Ascending aorta (tissue), 2 donors: ENCODE measurements at regions of chr16 and their contacts with region 1.

Region 1: DNA sequence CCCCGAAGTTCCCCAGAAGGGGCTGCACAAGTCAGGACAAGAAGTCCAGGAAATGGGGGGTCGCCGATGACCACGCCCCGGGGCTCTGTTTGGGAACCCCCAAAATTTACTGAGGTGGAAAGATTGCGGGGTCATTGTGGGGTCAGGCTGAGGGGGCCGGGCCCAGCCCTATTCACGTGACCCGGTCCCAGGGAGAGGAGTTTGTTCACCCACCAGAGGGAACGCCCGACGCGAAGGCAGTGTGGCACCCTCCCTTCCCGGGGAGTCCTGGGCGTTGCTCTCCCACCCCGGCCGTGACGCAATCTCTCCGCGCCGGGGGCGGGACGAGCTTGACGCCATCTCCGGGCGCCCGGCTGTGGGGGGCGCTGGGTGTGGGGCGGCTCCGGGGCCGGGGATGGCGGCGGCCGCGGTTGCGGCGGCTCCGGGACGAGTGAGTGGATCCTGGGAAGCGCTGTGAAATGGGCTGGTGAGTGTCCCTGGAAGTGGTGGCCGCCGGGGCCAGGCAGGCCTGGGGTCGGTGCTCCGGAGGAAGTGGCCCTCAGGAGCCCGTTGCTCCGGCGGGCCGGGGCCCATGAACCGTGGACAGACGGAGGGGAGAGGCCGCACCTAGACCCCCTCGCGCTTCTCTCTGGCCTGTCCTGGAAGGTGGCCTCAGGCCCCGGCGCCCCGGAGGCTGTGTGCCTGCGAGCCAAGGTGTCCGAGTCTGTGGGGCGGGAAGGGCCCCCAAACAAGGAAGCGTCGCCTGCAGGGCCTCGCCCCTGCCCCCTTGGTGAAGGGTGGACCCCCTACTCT is at the start of gene ATXN1L:
- DNase-seq: peak; percentile 65 to 96
- H3K4me3 ChIP-seq: peak within 1 kb of the TSS; percentile 81 to 88
- H3K27ac ChIP-seq: peak within 1 kb of the TSS; percentile 83 to 91
- H3K4me1 ChIP-seq: peaks cover 0 to 7% of the 10 kb centered on the region in 2 donors
- H3K27me3 ChIP-seq: no peaks in the 10 kb centered on the region
- CTCF ChIP-seq: no peak
- total RNA-seq, gene ATXN1L: 11.8 TPM

Region 2: DNA sequence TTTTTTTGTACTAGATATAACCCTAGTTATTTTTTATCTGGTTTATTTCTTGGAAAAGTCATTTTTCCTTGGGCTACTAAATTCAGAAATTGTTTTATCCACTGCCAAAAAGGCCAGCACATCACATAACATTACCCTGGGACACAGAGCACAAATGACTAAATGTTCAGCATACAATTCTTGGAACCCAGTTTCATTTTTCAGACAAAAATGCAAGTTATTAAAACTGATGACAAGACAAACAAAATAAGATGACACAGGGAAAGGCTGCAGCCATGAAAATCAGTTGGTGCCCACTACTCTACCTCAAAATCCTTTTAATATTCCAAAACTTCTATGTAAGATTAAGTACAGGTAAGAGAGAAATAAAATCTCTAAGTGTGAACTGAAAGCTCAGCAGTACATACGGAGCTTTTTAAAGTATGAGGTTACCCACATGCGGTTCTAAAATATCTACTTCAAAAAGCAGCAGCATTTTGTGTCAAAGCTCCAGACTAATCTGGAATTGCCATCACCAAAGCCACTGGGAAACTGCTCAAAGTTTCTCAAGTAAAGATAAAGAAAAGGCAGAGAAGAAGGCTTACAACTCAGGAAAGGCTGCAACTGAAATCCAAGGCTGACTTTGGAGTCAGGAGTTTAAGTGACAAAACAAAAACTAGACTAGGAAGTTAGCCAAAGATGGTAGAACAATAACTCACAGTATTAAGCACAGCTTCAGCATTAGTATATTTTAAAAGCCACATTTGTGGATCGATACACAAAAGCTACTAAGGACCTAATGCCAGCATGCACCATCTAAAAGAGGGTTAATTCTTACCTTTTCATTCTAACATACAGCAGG is 78.6 kb before region 1 on chr16:
- intact Hi-C with region 1: no loop called
- DNase-seq: no peak
- H3K4me3 ChIP-seq: no peak overlapping the region
- H3K27ac ChIP-seq: peak overlapping the region in 1 of 2 donors; percentile 39
- H3K4me1 ChIP-seq: peaks cover 0 to 4% of the 10 kb centered on the region in 2 donors
- H3K27me3 ChIP-seq: no peaks in the 10 kb centered on the region
- CTCF ChIP-seq: no peak

Region 3: GRCh38 chr16:71794943-71795342 is 50.9 kb before region 1 on chr16:
- intact Hi-C with region 1: no loop called
- DNase-seq: no peak
- H3K4me3 ChIP-seq: no peak overlapping the region
- H3K27ac ChIP-seq: no peak overlapping the region
- H3K4me1 ChIP-seq: peaks cover 0 to 2% of the 10 kb centered on the region in 2 donors
- H3K27me3 ChIP-seq: no peaks in the 10 kb centered on the region
- CTCF ChIP-seq: no peak

Region 4: GRCh38 chr16:71808593-71809459 is 37.0 kb before region 1 on chr16 and contains the start of gene AP1G1:
- intact Hi-C with region 1: loop called (anchors 1 kb)
- DNase-seq: peak; percentile 87 to 98
- H3K4me3 ChIP-seq: peak within 1 kb of the TSS; percentile 98 to 99
- H3K27ac ChIP-seq: peak within 1 kb of the TSS; percentile 100
- H3K4me1 ChIP-seq: peaks cover 9 to 24% of the 10 kb centered on the region in 2 donors
- H3K27me3 ChIP-seq: no peaks in the 10 kb centered on the region
- CTCF ChIP-seq: no peak
- total RNA-seq, gene AP1G1: 40.7 TPM